Activated B cell treated with CpG ODN at 0.5 μM for 24 hours (primary cell): ENCODE measurements at regions of chr14 and their contacts with region 1.

Region 1: DNA sequence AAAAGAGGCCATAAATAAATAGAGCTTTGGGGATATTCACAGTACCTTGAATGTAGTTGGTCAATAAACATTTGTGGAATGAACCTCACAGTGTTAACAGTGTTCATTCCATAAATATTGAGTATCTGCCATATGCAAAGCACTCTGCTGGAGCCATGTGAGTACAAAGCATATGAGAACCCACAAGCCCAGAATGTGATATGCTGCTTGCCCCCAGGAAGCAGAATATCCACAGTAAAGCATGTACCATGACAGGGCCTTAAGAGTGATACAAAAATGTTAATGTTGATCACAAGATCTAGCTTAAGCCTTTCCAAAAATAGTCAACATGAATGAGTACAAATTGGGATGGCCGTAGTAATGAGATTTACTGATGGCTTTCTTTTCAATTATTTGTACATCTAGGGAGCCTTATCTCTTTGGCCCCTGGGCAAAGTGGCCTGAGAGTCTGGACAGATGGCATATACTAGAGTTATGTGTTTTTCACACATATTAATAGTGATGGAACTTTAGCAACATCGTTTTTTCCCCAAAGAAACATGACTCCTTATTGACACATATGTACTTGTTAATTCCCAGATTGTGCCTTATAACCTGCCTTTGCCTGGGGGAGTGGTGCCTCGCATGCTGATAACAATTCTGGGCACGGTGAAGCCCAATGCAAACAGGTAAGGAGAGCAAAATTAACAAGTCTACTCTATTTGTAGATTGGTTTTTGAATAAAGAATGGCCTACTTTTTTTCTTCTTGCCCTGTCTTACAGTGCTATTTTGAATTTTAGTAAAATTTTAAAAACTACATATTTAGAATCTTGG is 10.9 kb downstream of the LGALS3 start:
- DNase-seq: no peak
- ATAC-seq: no peak
- H3K4me3 Mint-ChIP-seq: no peak overlapping the region
- H3K27ac Mint-ChIP-seq: no peak overlapping the region
- H3K4me1 Mint-ChIP-seq: no peaks in the 10 kb centered on the region
- H3K27me3 Mint-ChIP-seq: no peaks in the 10 kb centered on the region
- CTCF ChIP-seq: no peak

Region 2: DNA sequence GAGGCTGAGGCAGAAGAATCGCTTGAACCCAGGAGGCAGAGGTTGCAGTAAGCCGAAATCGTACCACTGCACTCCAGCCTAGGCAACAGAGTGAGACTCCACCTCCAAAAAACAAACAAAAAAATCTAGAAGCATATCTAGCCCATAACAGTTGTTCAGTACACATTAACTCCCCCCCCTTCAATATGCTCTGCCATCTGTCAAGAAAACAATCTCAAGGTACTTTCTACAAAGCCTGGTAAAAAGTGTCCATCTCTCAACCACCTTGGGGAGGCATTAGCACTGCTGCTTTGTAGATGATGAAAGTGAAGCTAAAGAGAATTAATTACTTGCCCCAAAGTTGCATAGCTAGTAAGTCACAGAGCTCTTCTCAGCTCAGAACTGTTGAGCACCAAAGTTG is 14.0 kb after region 1 on chr14:
- CTCF ChIA-PET with region 1: no interaction called
- POLR2A ChIA-PET with region 1: interaction called, 3 read pairs
- intact Hi-C with region 1: loop called (anchors 2 kb)
- DNase-seq: no peak
- ATAC-seq: no peak
- H3K4me3 Mint-ChIP-seq: no peak overlapping the region
- H3K27ac Mint-ChIP-seq: no peak overlapping the region
- H3K4me1 Mint-ChIP-seq: no peaks in the 10 kb centered on the region
- H3K27me3 Mint-ChIP-seq: no peaks in the 10 kb centered on the region
- CTCF ChIP-seq: no peak